Activated CD4-positive, alpha-beta memory T cell treated with anti-CD3 and anti-CD28 coated beads, Interleukin-2, amount 10 ng/mL, durations not matched to agents 7 days and 5 days (primary cell): ENCODE measurements at regions of chr17 and their contacts with region 1.

Region 1: GRCh38 chr17:2054512-2055291 is at the start of gene HIC1:
- DNase-seq: peak; percentile 85
- H3K4me3 Mint-ChIP-seq: peak within 1 kb of the TSS; percentile 79
- H3K27ac Mint-ChIP-seq: peak within 1 kb of the TSS; percentile 71
- H3K4me1 Mint-ChIP-seq: peaks cover 24% of the 10 kb centered on the region
- H3K27me3 Mint-ChIP-seq: peaks cover 17% of the 10 kb centered on the region
- total RNA-seq, gene HIC1: 38.3 to 39.8 TPM

Region 2: GRCh38 chr17:2064980-2065785 is 10.5 kb after region 1 on chr17:
- CTCF ChIA-PET with region 1: interaction called, 37 read pairs
- POLR2A ChIA-PET with region 1: interaction called, 58 read pairs
- DNase-seq: peak; percentile 80
- H3K4me3 Mint-ChIP-seq: no peak overlapping the region
- H3K27ac Mint-ChIP-seq: peak overlapping the region; percentile 74
- H3K4me1 Mint-ChIP-seq: peaks cover 85% of the 10 kb centered on the region
- H3K27me3 Mint-ChIP-seq: no peaks in the 10 kb centered on the region

Region 3: GRCh38 chr17:2090804-2091534 is 36.3 kb after region 1 on chr17:
- CTCF ChIA-PET with region 1: interaction called, 68 read pairs
- POLR2A ChIA-PET with region 1: interaction called, 43 read pairs
- DNase-seq: no peak
- H3K4me3 Mint-ChIP-seq: no peak overlapping the region
- H3K27ac Mint-ChIP-seq: peak overlapping the region; percentile 23
- H3K4me1 Mint-ChIP-seq: peaks cover 64% of the 10 kb centered on the region
- H3K27me3 Mint-ChIP-seq: no peaks in the 10 kb centered on the region

Region 4: DNA sequence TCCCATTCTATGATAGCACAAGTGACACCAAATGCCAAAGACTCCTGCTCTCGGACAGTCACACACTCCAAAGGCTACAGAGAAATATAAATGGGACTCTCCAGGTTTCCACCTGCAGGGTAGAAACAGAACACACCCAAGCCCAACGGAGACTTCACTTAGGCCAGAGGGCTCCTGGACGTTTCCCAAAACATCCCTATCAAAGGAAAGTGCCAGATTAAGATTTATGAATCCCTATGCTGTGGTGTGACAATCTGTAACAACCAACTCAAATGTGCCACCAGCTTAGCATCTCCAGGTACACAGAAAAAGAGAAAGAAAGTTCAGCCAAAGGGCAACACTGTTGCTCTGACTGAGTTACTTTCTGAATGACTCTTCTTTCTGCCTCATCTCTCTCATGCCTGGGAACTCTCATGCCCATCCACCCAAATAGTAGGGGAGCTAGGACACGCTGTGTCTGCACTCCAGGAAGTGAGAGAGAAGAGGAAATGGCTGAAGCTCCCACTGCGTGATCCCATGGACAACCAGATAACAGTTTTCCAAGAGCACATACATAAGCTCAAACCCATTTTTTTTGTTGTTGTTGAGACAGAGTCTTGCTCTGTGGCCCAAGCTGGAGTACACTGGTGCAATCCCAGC is 199.2 kb after region 1 on chr17:
- CTCF ChIA-PET with region 1: interaction called, 15 read pairs
- POLR2A ChIA-PET with region 1: interaction called, 16 read pairs
- DNase-seq: peak; percentile 54
- H3K4me3 Mint-ChIP-seq: peak overlapping the region; percentile 14
- H3K27ac Mint-ChIP-seq: peak overlapping the region; percentile 89
- H3K4me1 Mint-ChIP-seq: peaks cover 74% of the 10 kb centered on the region
- H3K27me3 Mint-ChIP-seq: no peaks in the 10 kb centered on the region

Region 5: GRCh38 chr17:2266045-2266864 is 211.6 kb after region 1 on chr17:
- CTCF ChIA-PET with region 1: interaction called, 8 read pairs
- POLR2A ChIA-PET with region 1: interaction called, 50 read pairs
- DNase-seq: peak; percentile 94
- H3K4me3 Mint-ChIP-seq: peak overlapping the region; percentile 79
- H3K27ac Mint-ChIP-seq: peak overlapping the region; percentile 100
- H3K4me1 Mint-ChIP-seq: peaks cover 80% of the 10 kb centered on the region
- H3K27me3 Mint-ChIP-seq: no peaks in the 10 kb centered on the region

Region 6: GRCh38 chr17:2303204-2304188 is 248.8 kb after region 1 on chr17 and contains the starts of genes SMG6 and SRR:
- CTCF ChIA-PET with region 1: interaction called, 3 read pairs
- POLR2A ChIA-PET with region 1: interaction called, 11 read pairs
- DNase-seq: peak; percentile 96
- H3K4me3 Mint-ChIP-seq: peak within 1 kb of the TSS; percentile 92
- H3K27ac Mint-ChIP-seq: peak within 1 kb of the TSS; percentile 73
- H3K4me1 Mint-ChIP-seq: peaks cover 49% of the 10 kb centered on the region
- H3K27me3 Mint-ChIP-seq: no peaks in the 10 kb centered on the region
- total RNA-seq, gene SMG6: 37.8 to 38.7 TPM
- total RNA-seq, gene SRR: 19.3 to 19.5 TPM

Region 7: DNA sequence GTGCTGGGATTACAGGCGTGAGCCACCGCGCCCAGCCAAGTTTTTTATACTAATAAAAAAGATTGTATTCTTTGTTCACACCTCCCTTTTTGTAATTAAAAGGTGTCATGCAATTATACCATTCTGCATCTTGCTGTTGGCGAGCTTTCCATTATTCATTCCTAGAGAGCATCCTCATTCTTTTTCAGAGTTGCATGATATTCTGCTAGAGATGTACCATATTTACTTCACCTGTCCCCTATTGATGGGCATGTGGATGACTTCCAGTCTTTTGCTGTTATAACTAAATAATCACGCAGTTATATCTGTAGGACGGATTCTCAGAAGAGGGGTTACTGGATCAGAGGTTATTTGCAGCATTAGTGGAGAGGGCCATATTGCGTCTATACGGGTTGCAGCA is 299.6 kb after region 1 on chr17:
- CTCF ChIA-PET with region 1: interaction called, 12 read pairs
- POLR2A ChIA-PET with region 1: no interaction called
- DNase-seq: no peak
- H3K4me3 Mint-ChIP-seq: no peak overlapping the region
- H3K27ac Mint-ChIP-seq: peak overlapping the region; percentile 79
- H3K4me1 Mint-ChIP-seq: peaks cover 17% of the 10 kb centered on the region
- H3K27me3 Mint-ChIP-seq: no peaks in the 10 kb centered on the region